ENCODE measurements at regions of chr11 and their contacts with region 1.

Region 1: GRCh38 chr11:113289431-113290187 is 24.8 kb upstream of the TTC12 start:
- DNase-seq: peak; percentile 81
- ATAC-seq: peak; percentile 98
- H3K4me3 Mint-ChIP-seq: no peak overlapping the region
- H3K27ac Mint-ChIP-seq: no peak overlapping the region
- H3K4me1 Mint-ChIP-seq: peaks cover 5% of the 10 kb centered on the region
- H3K27me3 Mint-ChIP-seq: no peaks in the 10 kb centered on the region; the same call in 1 of the 2 replicates
- CTCF ChIP-seq: peak; percentile 86

Region 2: DNA sequence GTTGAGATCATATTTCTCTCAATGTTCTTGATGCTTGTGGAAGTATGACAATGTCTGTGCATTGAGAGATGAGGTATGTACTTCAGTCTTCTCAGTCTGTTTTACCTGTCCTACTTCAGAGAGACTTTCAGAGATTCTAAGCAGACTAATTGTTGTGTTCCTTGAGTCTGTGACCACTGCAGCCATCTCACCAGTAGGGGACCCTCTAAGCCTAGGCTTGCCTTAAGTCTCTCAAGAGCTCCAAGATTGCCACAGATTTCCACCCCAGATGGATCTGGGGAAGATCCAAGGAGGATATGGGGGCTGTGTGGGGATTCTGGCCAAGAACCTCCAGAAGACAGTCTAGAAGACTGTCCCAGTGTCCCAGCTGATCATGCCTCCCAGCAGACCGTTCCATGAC is 849.1 kb before region 1 on chr11:
- CTCF ChIA-PET with region 1: interaction called, 19 read pairs
- POLR2A ChIA-PET with region 1: no interaction called
- DNase-seq: peak; percentile 62
- ATAC-seq: peak; percentile 96
- H3K4me3 Mint-ChIP-seq: no peak overlapping the region
- H3K27ac Mint-ChIP-seq: no peak overlapping the region
- H3K4me1 Mint-ChIP-seq: peaks cover 4% of the 10 kb centered on the region
- H3K27me3 Mint-ChIP-seq: peaks cover 4% of the 10 kb centered on the region
- CTCF ChIP-seq: peak; percentile 67

Region 3: GRCh38 chr11:112795142-112795815 is 494.3 kb before region 1 on chr11:
- CTCF ChIA-PET with region 1: interaction called, 20 read pairs
- POLR2A ChIA-PET with region 1: no interaction called
- DNase-seq: peak; percentile 67
- ATAC-seq: peak; percentile 60
- H3K4me3 Mint-ChIP-seq: no peak overlapping the region
- H3K27ac Mint-ChIP-seq: no peak overlapping the region
- H3K4me1 Mint-ChIP-seq: peaks cover 50% of the 10 kb centered on the region
- H3K27me3 Mint-ChIP-seq: no peaks in the 10 kb centered on the region; the same call in 1 of the 2 replicates
- CTCF ChIP-seq: peak; percentile 70

Region 4: DNA sequence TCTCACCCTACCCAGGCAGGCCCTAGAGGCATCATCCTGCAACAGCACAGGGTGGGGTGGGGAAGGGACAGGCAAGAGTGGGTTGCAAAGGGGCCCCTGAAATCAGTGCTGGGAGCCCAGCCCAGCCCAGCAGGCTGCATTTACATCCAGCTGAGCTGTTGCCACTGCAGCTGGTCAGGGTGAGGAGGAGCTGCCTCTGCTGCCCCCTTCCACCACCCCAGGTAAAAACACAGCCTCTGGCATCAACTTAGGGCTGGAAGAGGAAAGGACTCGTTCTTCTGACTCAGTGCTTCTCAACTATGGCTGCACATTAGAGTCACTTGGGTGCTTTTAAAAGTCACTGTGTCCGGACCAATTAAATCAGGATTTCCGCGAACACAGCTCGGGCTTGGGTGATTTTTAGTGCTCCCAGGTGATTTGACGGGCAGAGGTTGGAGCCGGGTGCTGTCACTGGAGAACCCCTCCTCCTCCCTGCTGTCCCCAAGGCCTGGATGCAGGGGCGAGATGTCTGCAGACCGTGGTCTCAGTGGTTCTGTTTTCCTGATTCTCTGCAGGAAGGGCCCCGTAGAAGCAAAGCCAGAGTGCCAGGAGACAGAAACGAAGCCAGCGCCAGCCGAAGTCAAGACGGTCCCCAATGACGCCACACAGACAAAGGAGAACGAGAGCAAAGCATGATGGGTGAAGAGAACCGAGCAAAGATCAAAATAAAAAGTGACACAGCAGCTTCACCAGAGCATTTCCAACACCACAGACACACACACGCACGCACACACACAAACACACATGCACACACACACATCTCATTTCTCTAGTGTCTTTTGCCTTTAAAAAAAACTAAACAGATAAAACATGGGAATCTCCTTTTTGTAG is 14.7 kb before region 1 on chr11:
- CTCF ChIA-PET with region 1: interaction called, 15 read pairs
- POLR2A ChIA-PET with region 1: no interaction called
- DNase-seq: peak; percentile 54
- ATAC-seq: peak; percentile 86
- H3K4me3 Mint-ChIP-seq: no peak overlapping the region
- H3K27ac Mint-ChIP-seq: peak overlapping the region; percentile 46; the same call in 1 of the 2 replicates
- H3K4me1 Mint-ChIP-seq: no peaks in the 10 kb centered on the region
- H3K27me3 Mint-ChIP-seq: no peaks in the 10 kb centered on the region; the same call in 1 of the 2 replicates
- CTCF ChIP-seq: peak; percentile 44; the same call in 1 of the 2 replicates